Tibial artery (tissue), 4 donors: ENCODE measurements at regions of chr2 and their contacts with region 1.

Region 1: DNA sequence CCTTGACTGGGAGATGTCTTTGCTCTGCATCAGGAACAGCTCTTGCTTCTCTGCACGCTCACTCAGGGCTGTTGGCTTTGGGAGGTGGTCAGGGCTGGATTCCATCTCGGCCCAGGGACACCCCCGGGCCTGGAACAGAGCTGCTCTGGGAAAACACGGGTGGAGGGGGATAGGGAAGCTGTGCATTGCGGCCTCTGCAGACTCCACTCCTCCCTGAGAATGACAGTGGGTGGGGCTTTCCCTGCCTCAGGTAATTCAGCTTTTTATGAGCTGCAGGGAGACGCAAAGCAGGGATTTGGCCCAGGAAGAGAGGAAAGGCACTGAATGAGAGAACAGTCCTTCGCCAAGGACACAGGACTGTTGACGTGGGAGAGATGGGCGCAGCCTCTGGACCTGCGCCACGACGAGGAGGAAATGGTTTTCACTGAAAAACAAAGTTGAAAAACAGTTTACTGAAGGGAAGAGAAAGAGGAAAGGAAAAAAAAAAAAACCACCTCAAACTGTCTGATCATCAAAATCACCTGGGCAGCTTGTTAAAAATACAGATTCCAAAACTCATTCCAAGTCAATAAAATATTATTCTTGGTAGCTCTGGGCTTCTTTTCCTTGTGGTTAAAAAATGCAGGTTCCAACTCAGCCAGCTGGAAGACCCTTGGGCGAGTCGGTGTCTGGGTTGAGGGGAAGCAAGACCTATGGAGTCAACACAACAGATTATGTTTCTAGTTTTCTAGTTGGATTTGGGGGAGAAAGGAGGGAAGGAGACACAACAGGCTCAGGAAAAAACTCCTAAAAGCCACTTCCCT is 194.0 kb downstream of the ZFP36L2 start:
- DNase-seq: peak; percentile 50 to 72
- H3K4me3 ChIP-seq: no peak overlapping the region
- H3K27ac ChIP-seq: peak overlapping the region; percentile 28 to 55
- H3K4me1 ChIP-seq: peaks cover 0 to 16% (median 10%) of the 10 kb centered on the region in 4 donors
- H3K27me3 ChIP-seq: no peaks in the 10 kb centered on the region
- CTCF ChIP-seq: no peak

Region 2: GRCh38 chr2:43051316-43051715 is 18.9 kb after region 1 on chr2:
- intact Hi-C with region 1: loop called (anchors 1 kb)
- DNase-seq: peak in 1 of 2 donors; percentile 29
- H3K4me3 ChIP-seq: no peak overlapping the region
- H3K27ac ChIP-seq: no peak overlapping the region
- H3K4me1 ChIP-seq: peaks cover 0 to 42% (median 16%) of the 10 kb centered on the region in 4 donors
- H3K27me3 ChIP-seq: no peaks in the 10 kb centered on the region
- CTCF ChIP-seq: no peak

Region 3: GRCh38 chr2:43343573-43344304 is 311.3 kb after region 1 on chr2:
- intact Hi-C with region 1: no loop called
- DNase-seq: peak; percentile 92
- H3K4me3 ChIP-seq: peak overlapping the region in 1 of 2 donors; percentile 3
- H3K27ac ChIP-seq: peak overlapping the region; percentile 76 to 83
- H3K4me1 ChIP-seq: peaks cover 3 to 94% (median 73%) of the 10 kb centered on the region in 4 donors
- H3K27me3 ChIP-seq: no peaks in the 10 kb centered on the region
- CTCF ChIP-seq: no peak